ENCODE measurements at regions of chr12 and their contacts with region 1.

Region 1: GRCh38 chr12:50167041-50167828 is at the start of gene CERS5:
- DNase-seq: peak; percentile 99
- H3K4me3 Mint-ChIP-seq: peak within 1 kb of the TSS; percentile 95
- H3K27ac Mint-ChIP-seq: peak within 1 kb of the TSS; percentile 94
- H3K4me1 Mint-ChIP-seq: peaks cover 31% of the 10 kb centered on the region
- H3K27me3 Mint-ChIP-seq: no peaks in the 10 kb centered on the region
- total RNA-seq, gene CERS5: 114 and 115 TPM in 2 replicates

Region 2: GRCh38 chr12:50057000-50057841 is 110.0 kb before region 1 on chr12 and contains the start of gene ASIC1:
- intact Hi-C with region 1: no loop called
- DNase-seq: peak; percentile 46
- H3K4me3 Mint-ChIP-seq: peak within 1 kb of the TSS; percentile 89
- H3K27ac Mint-ChIP-seq: peak within 1 kb of the TSS; percentile 72
- H3K4me1 Mint-ChIP-seq: peaks cover 36% of the 10 kb centered on the region
- H3K27me3 Mint-ChIP-seq: peaks cover 26% of the 10 kb centered on the region
- total RNA-seq, gene ASIC1: 20.4 and 20.7 TPM in 2 replicates

Region 3: GRCh38 chr12:50084775-50085614 is 82.2 kb before region 1 on chr12 and contains the start of gene SMARCD1:
- intact Hi-C with region 1: loop called (anchors 2 kb)
- DNase-seq: peak; percentile 77
- H3K4me3 Mint-ChIP-seq: peak within 1 kb of the TSS; percentile 88
- H3K27ac Mint-ChIP-seq: peak within 1 kb of the TSS; percentile 93
- H3K4me1 Mint-ChIP-seq: peaks cover 29% of the 10 kb centered on the region
- H3K27me3 Mint-ChIP-seq: no peaks in the 10 kb centered on the region
- total RNA-seq, gene SMARCD1: 71.5 and 76.8 TPM in 2 replicates

Region 4: DNA sequence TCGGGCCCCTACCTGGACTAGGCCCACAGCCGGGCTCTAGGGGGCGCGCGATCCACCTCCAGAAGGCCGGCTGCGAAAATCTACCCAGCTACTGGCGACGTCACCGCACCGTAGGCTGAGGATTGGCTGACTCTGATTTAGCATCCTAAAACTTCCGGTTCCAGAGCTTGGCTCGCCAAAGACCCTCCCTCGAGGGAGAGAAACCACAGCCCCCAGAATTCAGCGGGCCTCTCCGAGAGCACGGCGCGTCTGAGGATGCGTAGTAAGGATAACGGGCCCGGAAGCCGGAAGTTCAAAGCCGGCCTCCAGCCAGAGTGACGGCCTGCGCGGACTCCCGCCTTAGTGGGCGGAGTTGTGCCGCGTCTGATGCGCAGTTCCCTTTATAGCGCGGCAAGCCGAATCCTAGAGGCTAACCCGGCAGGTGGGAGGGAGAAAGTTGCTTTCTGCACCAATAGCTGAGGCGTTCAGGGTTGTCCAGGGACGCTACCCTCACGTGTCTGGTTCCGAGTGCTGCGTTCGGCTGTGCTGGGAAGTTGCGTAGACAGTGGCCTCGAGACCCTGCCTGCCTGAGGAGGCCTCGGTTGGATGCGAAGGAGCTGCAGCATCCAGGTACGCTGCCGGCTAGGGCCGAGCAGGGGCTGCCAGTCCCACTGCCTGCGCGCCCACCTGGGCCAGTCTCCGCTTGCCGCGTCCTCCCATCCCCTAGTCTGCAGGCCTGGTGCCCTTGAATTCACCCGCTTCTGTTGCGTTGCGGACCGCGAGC is 55.4 kb before region 1 on chr12 and contains the start of gene COX14:
- intact Hi-C with region 1: loop called (anchors 1 kb)
- DNase-seq: peak; percentile 99
- H3K4me3 Mint-ChIP-seq: peak within 1 kb of the TSS; percentile 99
- H3K27ac Mint-ChIP-seq: peak within 1 kb of the TSS; percentile 98
- H3K4me1 Mint-ChIP-seq: peaks cover 24% of the 10 kb centered on the region
- H3K27me3 Mint-ChIP-seq: no peaks in the 10 kb centered on the region
- total RNA-seq, gene COX14: 38.1 and 43.5 TPM in 2 replicates

Region 5: GRCh38 chr12:50132505-50133135 is 34.6 kb before region 1 on chr12:
- intact Hi-C with region 1: loop called (anchors 2 kb)
- DNase-seq: no peak
- H3K4me3 Mint-ChIP-seq: no peak overlapping the region
- H3K27ac Mint-ChIP-seq: peak overlapping the region; percentile 44
- H3K4me1 Mint-ChIP-seq: peaks cover 10% of the 10 kb centered on the region
- H3K27me3 Mint-ChIP-seq: no peaks in the 10 kb centered on the region

Region 6: GRCh38 chr12:50187084-50187900 is 20.1 kb after region 1 on chr12:
- intact Hi-C with region 1: loop called (anchors 1 kb)
- DNase-seq: peak; percentile 29
- H3K4me3 Mint-ChIP-seq: peak overlapping the region; percentile 69
- H3K27ac Mint-ChIP-seq: peak overlapping the region; percentile 98
- H3K4me1 Mint-ChIP-seq: peaks cover 67% of the 10 kb centered on the region
- H3K27me3 Mint-ChIP-seq: no peaks in the 10 kb centered on the region

Region 7: DNA sequence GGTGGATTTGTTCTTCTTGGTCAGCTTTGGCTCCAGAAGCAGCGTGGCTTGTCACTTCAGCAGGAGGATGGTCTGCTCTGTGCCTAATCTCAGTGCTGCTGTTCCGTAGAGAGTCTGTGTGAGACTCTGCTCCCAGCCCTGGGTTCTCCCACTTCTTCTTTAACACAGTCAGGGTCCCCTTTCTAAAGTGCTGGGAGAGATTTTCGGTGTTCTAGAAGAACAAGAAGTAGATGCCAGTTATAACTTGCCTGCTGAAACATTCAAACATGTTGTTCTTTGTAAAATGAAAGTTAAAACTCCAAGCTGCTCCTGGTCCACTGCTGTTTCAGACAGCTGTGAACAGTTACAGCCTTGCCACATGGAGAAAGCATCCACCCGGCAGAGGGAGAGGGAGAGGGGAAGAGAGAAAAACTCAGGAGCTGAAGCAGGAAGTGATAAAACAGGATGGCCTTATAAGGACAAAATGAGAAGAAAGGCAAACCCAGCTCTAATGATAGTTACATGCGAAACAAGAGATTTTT is 55.1 kb after region 1 on chr12:
- intact Hi-C with region 1: loop called (anchors 1 kb)
- DNase-seq: no peak
- H3K4me3 Mint-ChIP-seq: no peak overlapping the region
- H3K27ac Mint-ChIP-seq: no peak overlapping the region
- H3K4me1 Mint-ChIP-seq: peaks cover 28% of the 10 kb centered on the region
- H3K27me3 Mint-ChIP-seq: no peaks in the 10 kb centered on the region

Region 8: DNA sequence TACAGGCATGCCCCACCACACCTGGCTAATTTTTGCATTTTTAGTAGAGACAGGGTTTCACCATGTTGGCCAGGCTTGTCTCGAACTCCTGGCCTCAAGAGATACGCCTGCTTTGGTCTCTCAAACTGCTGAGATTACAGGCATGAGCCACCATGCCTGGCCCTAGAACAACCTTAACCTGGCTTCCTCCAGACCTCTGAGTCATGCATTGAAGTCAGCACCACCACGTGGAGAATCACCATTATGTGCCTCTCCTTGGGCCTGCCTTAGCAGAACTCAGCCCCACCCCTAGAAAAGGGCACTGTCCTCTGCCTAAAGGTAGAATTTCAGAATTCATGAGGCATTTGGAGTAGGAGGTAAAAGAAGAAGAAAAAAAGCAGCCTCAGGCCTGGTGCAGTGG is 67.1 kb after region 1 on chr12:
- intact Hi-C with region 1: no loop called
- DNase-seq: no peak
- H3K4me3 Mint-ChIP-seq: no peak overlapping the region
- H3K27ac Mint-ChIP-seq: peak overlapping the region; percentile 50
- H3K4me1 Mint-ChIP-seq: peaks cover 17% of the 10 kb centered on the region
- H3K27me3 Mint-ChIP-seq: no peaks in the 10 kb centered on the region